ENCODE measurements at regions of chr16 and their contacts with region 1.

Region 1: GRCh38 chr16:1772736-1773584 is at the starts of genes EME2 and MRPS34:
- DNase-seq: peak; percentile 80
- H3K4me3 Mint-ChIP-seq: peak within 1 kb of the TSS; percentile 96
- H3K27ac Mint-ChIP-seq: peak within 1 kb of the TSS; percentile 96
- H3K4me1 Mint-ChIP-seq: peaks cover 10% of the 10 kb centered on the region
- H3K27me3 Mint-ChIP-seq: no peaks in the 10 kb centered on the region
- total RNA-seq, gene EME2: 26.1 and 26.2 TPM in 2 replicates
- total RNA-seq, gene MRPS34: 179 and 184 TPM in 2 replicates

Region 2: GRCh38 chr16:1812732-1813163 is 39.8 kb after region 1 on chr16:
- intact Hi-C with region 1: no loop called
- DNase-seq: peak; percentile 30
- H3K4me3 Mint-ChIP-seq: no peak overlapping the region
- H3K27ac Mint-ChIP-seq: no peak overlapping the region
- H3K4me1 Mint-ChIP-seq: peaks cover 2% of the 10 kb centered on the region
- H3K27me3 Mint-ChIP-seq: no peaks in the 10 kb centered on the region

Region 3: GRCh38 chr16:1826691-1827575 is 54.0 kb after region 1 on chr16 and contains the starts of genes FAHD1 and HAGH:
- intact Hi-C with region 1: loop called (anchors 2 kb)
- DNase-seq: peak; percentile 92
- H3K4me3 Mint-ChIP-seq: peak within 1 kb of the TSS; percentile 93
- H3K27ac Mint-ChIP-seq: peak within 1 kb of the TSS; percentile 85
- H3K4me1 Mint-ChIP-seq: peaks cover 24% of the 10 kb centered on the region
- H3K27me3 Mint-ChIP-seq: no peaks in the 10 kb centered on the region
- total RNA-seq, gene FAHD1: 17.6 and 20.8 TPM in 2 replicates
- total RNA-seq, gene HAGH: 60.3 and 67.6 TPM in 2 replicates

Measured in activated T-helper 2 cell treated with anti-CD3 and anti-CD28 coated beads, Interferon-gamma antibody, Interleukin-2, Interleukin-4, amounts not matched to agents 10 μg/mL and 5 μg/mL and 100 μg/mL, durations not matched to agents 14 hours and 24 hours and 36 hours (primary cell).